ENCODE measurements at regions of chr6 and their contacts with region 1.

Region 1: DNA sequence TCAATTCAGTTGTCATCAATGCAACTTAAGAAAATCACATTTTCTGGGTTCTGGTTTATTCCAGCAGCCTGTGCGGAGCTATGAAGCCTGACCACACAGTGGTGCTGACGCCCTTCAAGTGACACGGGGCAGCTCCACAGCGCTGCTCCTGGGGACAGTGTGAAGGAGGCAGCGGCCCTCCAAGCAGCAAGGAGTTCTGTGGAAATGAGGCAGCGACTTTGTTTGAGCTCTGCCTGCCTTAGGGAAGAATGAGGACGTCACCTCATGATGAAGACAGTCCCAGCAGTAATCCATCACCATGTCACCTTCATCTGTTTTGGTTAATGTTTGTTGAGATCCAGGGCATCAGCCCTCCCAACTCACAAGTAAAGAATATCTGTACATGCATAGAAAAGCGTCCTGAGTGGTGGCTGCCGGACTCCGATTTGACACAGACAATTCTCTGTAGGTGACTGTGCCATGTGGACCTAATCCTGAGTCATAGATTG is 168.5 kb upstream of the UST start:
- DNase-seq: no peak
- ATAC-seq: peak; percentile 100
- H3K4me3 ChIP-seq: no peak overlapping the region
- H3K27ac ChIP-seq: no peak overlapping the region
- H3K4me1 ChIP-seq: no peaks in the 10 kb centered on the region
- H3K27me3 ChIP-seq: peaks cover 0 to 2% of the 10 kb centered on the region in 2 experiments; a peak in 2 of 4 replicates
- CTCF ChIP-seq: peak; percentile 96 to 99 (median 98); a peak in 5 of 6 replicates
- EP300 ChIP-seq: no peak
- POLR2A ChIP-seq: no peak
- RAD21 ChIP-seq: peak; percentile 99

Region 2: GRCh38 chr6:147941143-147941542 is 637.1 kb before region 1 on chr6:
- CTCF ChIA-PET with region 1: no interaction called
- POLR2A ChIA-PET with region 1: no interaction called
- RAD21 ChIA-PET with region 1: no interaction called
- SMC1A ChIA-PET with region 1: no interaction called
- in situ Hi-C with region 1: no loop called
- intact Hi-C with region 1: no loop called
- DNase-seq: no peak
- ATAC-seq: no peak
- H3K4me3 ChIP-seq: no peak overlapping the region
- H3K27ac ChIP-seq: no peak overlapping the region
- H3K4me1 ChIP-seq: no peaks in the 10 kb centered on the region
- H3K27me3 ChIP-seq: no peaks in the 10 kb centered on the region; a peak in 1 of 4 replicates
- CTCF ChIP-seq: no peak
- EP300 ChIP-seq: no peak
- POLR2A ChIP-seq: no peak
- RAD21 ChIP-seq: no peak

Region 3: GRCh38 chr6:148559848-148560433 is 18.3 kb before region 1 on chr6:
- CTCF ChIA-PET with region 1: interaction called, 20 read pairs
- POLR2A ChIA-PET with region 1: no interaction called
- RAD21 ChIA-PET with region 1: interaction called, 5 read pairs
- SMC1A ChIA-PET with region 1: interaction called, 6 read pairs
- in situ Hi-C with region 1: no loop called
- intact Hi-C with region 1: no loop called
- DNase-seq: no peak
- ATAC-seq: peak; percentile 97
- H3K4me3 ChIP-seq: 0 out of 2 replicates have a peak overlapping the region, but pooled peaks have one; percentile 39
- H3K27ac ChIP-seq: no peak overlapping the region
- H3K4me1 ChIP-seq: no peaks in the 10 kb centered on the region
- H3K27me3 ChIP-seq: peaks cover 0 to 4% of the 10 kb centered on the region in 2 experiments; a peak in 1 of 4 replicates
- CTCF ChIP-seq: peak; percentile 89 to 95 (median 92)
- EP300 ChIP-seq: no peak
- POLR2A ChIP-seq: no peak
- RAD21 ChIP-seq: peak; percentile 89

Region 4: DNA sequence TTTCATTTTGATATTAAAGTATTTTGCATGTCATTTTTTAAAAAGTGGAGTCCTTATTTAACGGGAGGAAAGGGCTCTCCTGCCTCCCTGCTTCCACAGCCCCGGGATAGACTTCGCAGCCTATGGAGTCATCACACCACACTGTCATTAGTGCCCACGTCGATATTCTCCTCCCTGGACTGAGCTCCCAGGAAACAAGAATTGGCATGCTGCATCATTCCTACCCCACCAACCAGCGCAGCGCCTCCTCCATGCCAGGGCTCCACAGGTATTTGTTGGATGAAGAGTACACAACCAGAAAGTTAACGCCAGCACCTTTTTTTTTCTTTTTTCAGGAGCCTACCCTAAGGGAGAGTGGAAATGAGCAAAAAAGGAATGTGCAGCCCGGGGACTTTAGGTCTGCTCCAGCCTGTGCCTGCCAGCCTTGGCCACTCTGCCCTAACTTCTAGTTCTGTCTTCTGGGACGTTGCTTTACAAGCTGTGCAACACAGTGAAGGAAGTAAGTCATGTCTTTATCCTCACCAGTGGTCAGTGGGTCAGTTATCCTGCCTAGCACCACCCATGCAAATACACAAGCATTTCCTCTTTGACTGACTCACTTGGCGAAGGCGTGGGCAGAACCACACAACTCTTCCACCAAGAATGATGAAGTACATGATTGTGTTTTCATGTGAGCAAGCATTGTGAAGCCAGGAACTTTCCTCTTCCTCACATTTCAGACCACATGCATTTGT is 12.2 kb before region 1 on chr6:
- CTCF ChIA-PET with region 1: interaction called, 20 read pairs
- POLR2A ChIA-PET with region 1: no interaction called
- RAD21 ChIA-PET with region 1: interaction called, 3 read pairs
- SMC1A ChIA-PET with region 1: interaction called, 4 read pairs
- in situ Hi-C with region 1: no loop called
- intact Hi-C with region 1: no loop called
- DNase-seq: no peak
- ATAC-seq: peak; percentile 83
- H3K4me3 ChIP-seq: no peak overlapping the region
- H3K27ac ChIP-seq: no peak overlapping the region
- H3K4me1 ChIP-seq: no peaks in the 10 kb centered on the region; the same call in 1 of the 2 replicates
- H3K27me3 ChIP-seq: peaks cover 0 to 7% of the 10 kb centered on the region in 2 experiments; a peak in 1 of 4 replicates
- CTCF ChIP-seq: no peak
- EP300 ChIP-seq: no peak
- POLR2A ChIP-seq: no peak
- RAD21 ChIP-seq: no peak

Region 5: GRCh38 chr6:148599967-148600426 is 21.7 kb after region 1 on chr6:
- CTCF ChIA-PET with region 1: no interaction called
- POLR2A ChIA-PET with region 1: no interaction called
- RAD21 ChIA-PET with region 1: no interaction called
- SMC1A ChIA-PET with region 1: no interaction called
- in situ Hi-C with region 1: no loop called
- intact Hi-C with region 1: no loop called
- DNase-seq: no peak
- ATAC-seq: no peak
- H3K4me3 ChIP-seq: no peak overlapping the region
- H3K27ac ChIP-seq: no peak overlapping the region
- H3K4me1 ChIP-seq: no peaks in the 10 kb centered on the region
- H3K27me3 ChIP-seq: no peaks in the 10 kb centered on the region; a peak in 1 of 4 replicates
- CTCF ChIP-seq: no peak
- EP300 ChIP-seq: no peak
- POLR2A ChIP-seq: no peak
- RAD21 ChIP-seq: no peak

Region 6: GRCh38 chr6:148677594-148678476 is 99.5 kb after region 1 on chr6:
- CTCF ChIA-PET with region 1: interaction called, 7 read pairs
- POLR2A ChIA-PET with region 1: no interaction called
- RAD21 ChIA-PET with region 1: interaction called, 3 read pairs
- SMC1A ChIA-PET with region 1: interaction called, 10 read pairs
- in situ Hi-C with region 1: no loop called
- intact Hi-C with region 1: loop called (anchors 5 kb)
- DNase-seq: peak; percentile 82
- ATAC-seq: peak; percentile 90
- H3K4me3 ChIP-seq: no peak overlapping the region
- H3K27ac ChIP-seq: peak overlapping the region; percentile 75
- H3K4me1 ChIP-seq: peaks cover 20% of the 10 kb centered on the region
- H3K27me3 ChIP-seq: no peaks in the 10 kb centered on the region
- CTCF ChIP-seq: no peak
- EP300 ChIP-seq: peak; percentile 74 to 90; a peak in 3 of 4 replicates
- POLR2A ChIP-seq: no peak
- RAD21 ChIP-seq: no peak

Region 7: GRCh38 chr6:148700741-148701311 is 122.5 kb after region 1 on chr6:
- CTCF ChIA-PET with region 1: interaction called, 12 read pairs
- POLR2A ChIA-PET with region 1: interaction called, 3 read pairs
- RAD21 ChIA-PET with region 1: interaction called, 18 read pairs
- SMC1A ChIA-PET with region 1: interaction called, 21 read pairs
- in situ Hi-C with region 1: no loop called
- intact Hi-C with region 1: loop called (anchors 5 kb)
- DNase-seq: no peak
- ATAC-seq: peak; percentile 90
- H3K4me3 ChIP-seq: peak overlapping the region; percentile 46; the same call in 1 of the 2 replicates
- H3K27ac ChIP-seq: no peak overlapping the region
- H3K4me1 ChIP-seq: 0 out of 2 replicates have a peak, but pooled peaks cover 3% of the 10 kb centered on the region
- H3K27me3 ChIP-seq: no peaks in the 10 kb centered on the region
- CTCF ChIP-seq: no peak
- EP300 ChIP-seq: no peak
- POLR2A ChIP-seq: no peak
- RAD21 ChIP-seq: no peak

Region 8: GRCh38 chr6:148746363-148747144 is 168.3 kb after region 1 on chr6 and contains the start of gene UST:
- CTCF ChIA-PET with region 1: interaction called, 6 read pairs
- POLR2A ChIA-PET with region 1: interaction called, 3 read pairs
- RAD21 ChIA-PET with region 1: interaction called, 7 read pairs
- SMC1A ChIA-PET with region 1: interaction called, 5 read pairs
- in situ Hi-C with region 1: no loop called
- intact Hi-C with region 1: loop called (anchors 2 kb)
- DNase-seq: no peak
- ATAC-seq: peak; percentile 47
- H3K4me3 ChIP-seq: peak within 1 kb of the TSS; percentile 64
- H3K27ac ChIP-seq: no peak within 1 kb of the TSS
- H3K4me1 ChIP-seq: no peaks in the 10 kb centered on the region
- H3K27me3 ChIP-seq: peaks cover 1 to 17% of the 10 kb centered on the region in 2 experiments; a peak in 3 of 4 replicates
- CTCF ChIP-seq: peak; percentile 47 to 70 (median 57)
- EP300 ChIP-seq: no peak
- POLR2A ChIP-seq: no peak
- RAD21 ChIP-seq: peak; percentile 85
- polyA plus RNA-seq, gene UST: 3.6 to 3.7 TPM

Region 9: GRCh38 chr6:148947621-148948444 is 369.5 kb after region 1 on chr6:
- CTCF ChIA-PET with region 1: interaction called, 16 read pairs
- POLR2A ChIA-PET with region 1: no interaction called
- RAD21 ChIA-PET with region 1: interaction called, 12 read pairs
- SMC1A ChIA-PET with region 1: interaction called, 8 read pairs
- in situ Hi-C with region 1: loop called (anchors 5 kb)
- intact Hi-C with region 1: loop called (anchors 1 kb)
- DNase-seq: peak; percentile 27
- ATAC-seq: peak; percentile 94
- H3K4me3 ChIP-seq: no peak overlapping the region
- H3K27ac ChIP-seq: no peak overlapping the region
- H3K4me1 ChIP-seq: no peaks in the 10 kb centered on the region
- H3K27me3 ChIP-seq: no peaks in the 10 kb centered on the region; a peak in 1 of 4 replicates
- CTCF ChIP-seq: peak; percentile 82 to 84 (median 83)
- EP300 ChIP-seq: no peak
- POLR2A ChIP-seq: no peak
- RAD21 ChIP-seq: peak; percentile 87

Measured in GM12878 (cell line).